ENCODE measurements at regions of chrX and their contacts with region 1.

Region 1: DNA sequence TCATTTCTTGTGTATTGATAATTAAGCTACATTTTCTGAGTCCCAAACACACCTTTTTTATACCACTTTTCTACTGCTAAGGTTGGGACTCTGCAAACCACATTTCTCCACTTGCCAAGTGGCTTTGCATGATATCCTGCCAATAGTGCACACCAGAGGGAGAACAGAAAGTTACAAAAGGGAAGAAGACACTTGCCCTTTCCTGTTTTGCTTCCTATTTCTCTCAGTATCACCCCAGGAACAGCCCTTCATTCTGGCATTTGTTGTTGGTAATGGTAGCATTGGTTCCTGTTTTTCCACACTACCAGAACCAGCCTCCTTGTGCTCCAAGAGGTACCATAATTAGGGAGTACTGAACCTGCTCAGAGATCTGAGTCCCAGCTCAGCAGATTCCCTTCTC is 87.1 kb downstream of the HDX start:
- H3K4me3 Mint-ChIP-seq: no peak overlapping the region
- H3K27ac Mint-ChIP-seq: no peak overlapping the region
- H3K4me1 Mint-ChIP-seq: peaks cover 27% of the 10 kb centered on the region
- H3K27me3 Mint-ChIP-seq: peaks cover 3% of the 10 kb centered on the region

Region 2: DNA sequence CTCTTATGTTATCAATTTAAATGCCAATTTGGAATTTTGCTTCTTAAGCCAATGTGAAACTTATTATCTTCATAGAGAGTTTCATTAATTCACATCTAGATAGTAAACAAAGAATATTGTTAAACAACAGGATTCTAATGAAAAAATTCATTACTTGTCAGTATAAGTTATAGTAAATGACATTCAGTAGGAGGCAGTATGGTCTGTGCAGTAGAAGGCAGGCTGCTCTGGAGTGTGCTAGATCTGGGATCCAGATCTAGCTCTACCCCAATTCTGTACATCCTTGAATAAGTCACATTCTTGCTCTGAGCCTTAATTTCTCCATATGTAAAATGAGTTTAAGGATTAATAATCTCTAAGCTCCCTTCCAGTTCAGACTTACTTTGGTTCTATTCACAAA is 1109.8 kb before region 1 on chrX:
- intact Hi-C with region 1: no loop called
- H3K4me3 Mint-ChIP-seq: no peak overlapping the region
- H3K27ac Mint-ChIP-seq: no peak overlapping the region
- H3K4me1 Mint-ChIP-seq: no peaks in the 10 kb centered on the region
- H3K27me3 Mint-ChIP-seq: no peaks in the 10 kb centered on the region

Region 3: DNA sequence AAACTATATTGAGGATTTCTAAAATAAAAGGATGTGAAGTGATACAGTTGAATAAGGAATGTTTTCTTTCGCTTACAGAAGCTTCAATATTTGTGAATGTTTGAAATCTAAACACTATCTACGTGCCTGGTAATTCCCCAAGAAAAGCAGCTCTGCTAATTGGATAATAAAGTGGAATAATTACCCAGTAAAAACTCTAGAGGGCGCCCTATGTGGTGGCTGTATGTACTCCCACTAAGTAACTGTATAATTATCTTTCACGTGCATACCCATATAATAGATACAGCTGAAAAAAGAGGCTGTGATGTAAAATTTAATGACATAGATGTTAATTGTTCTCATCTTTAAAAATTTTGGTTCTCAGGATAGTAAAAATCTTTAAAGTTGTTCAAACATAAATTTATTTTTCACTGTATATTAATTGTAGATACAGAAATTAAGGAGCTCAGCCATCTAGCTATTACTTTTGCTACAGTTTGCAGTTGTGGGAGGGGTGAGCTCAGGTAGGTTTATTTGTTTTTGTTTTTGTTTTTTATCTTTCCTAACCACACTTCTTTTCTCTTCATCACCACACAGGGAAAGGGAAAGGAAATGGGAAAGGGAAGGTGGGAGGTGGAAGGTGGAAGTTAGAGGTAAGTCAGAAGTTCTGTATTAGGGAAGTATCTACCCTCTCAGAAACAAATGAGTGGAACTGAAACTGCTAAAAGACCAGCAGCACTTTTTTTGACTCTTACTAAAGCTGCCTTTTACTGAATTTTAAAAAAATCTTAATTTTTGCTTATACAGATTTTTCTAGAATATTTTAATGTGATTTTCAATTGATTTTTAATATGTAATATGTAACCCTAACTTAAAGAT is 75.4 kb before region 1 on chrX:
- intact Hi-C with region 1: loop called (anchors 5 kb)
- H3K4me3 Mint-ChIP-seq: peak overlapping the region; percentile 23
- H3K27ac Mint-ChIP-seq: no peak overlapping the region
- H3K4me1 Mint-ChIP-seq: peaks cover 29% of the 10 kb centered on the region
- H3K27me3 Mint-ChIP-seq: peaks cover 2% of the 10 kb centered on the region

Region 4: GRCh38 chrX:84487365-84488353 is 72.5 kb after region 1 on chrX:
- intact Hi-C with region 1: loop called (anchors 10 kb)
- H3K4me3 Mint-ChIP-seq: no peak overlapping the region
- H3K27ac Mint-ChIP-seq: peak overlapping the region; percentile 63
- H3K4me1 Mint-ChIP-seq: peaks cover 13% of the 10 kb centered on the region
- H3K27me3 Mint-ChIP-seq: no peaks in the 10 kb centered on the region